Tibial artery (tissue), 4 donors: ENCODE measurements at regions of chr12 and their contacts with region 1.

Region 1: DNA sequence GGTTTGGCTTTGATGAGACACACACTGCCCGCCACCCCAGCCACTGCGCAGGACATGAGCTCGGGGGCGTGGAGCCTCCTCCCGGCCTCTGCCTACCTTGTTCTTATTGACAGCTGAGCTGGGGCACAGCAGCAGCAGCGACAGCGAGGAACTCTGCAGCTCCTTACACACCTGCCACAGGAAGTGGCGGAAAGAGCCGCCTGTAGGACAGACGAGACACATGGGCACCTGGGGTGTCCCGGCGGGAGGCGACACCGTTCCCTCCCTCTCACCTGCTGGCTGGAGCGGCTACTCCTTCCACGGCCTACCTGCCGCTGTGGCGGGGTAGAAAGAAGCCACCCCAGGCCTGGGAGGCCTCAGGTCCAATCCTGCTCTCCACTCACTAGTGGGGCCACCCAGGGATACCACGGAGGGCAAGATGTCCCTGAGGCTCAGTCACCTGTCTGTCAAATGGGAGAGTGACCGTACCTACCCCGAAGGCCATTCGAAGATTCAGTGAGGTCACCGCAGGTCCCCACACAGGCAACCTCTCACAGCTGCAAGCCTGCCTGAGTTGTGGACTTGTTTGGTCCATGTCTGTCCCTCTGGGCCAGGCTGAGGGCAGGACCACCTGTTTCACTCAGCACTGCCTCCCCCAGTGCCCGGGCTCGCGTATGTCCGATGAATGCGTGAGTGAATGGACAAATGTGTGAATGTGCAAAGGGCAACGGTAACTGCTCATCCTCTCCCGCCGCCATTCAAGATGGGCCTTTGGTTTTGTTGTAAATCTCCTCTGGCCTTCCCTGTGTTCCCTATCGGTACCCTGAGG is 42.6 kb downstream of the TRAFD1 start:
- DNase-seq: peak in 1 of 2 donors; percentile 57
- H3K4me3 ChIP-seq: no peak overlapping the region
- H3K27ac ChIP-seq: no peak overlapping the region
- H3K4me1 ChIP-seq: no peaks in the 10 kb centered on the region
- H3K27me3 ChIP-seq: no peaks in the 10 kb centered on the region
- CTCF ChIP-seq: no peak

Region 2: GRCh38 chr12:111841750-111842555 is 326.0 kb before region 1 on chr12 and contains the start of gene MAPKAPK5:
- intact Hi-C with region 1: no loop called
- DNase-seq: peak; percentile 91 to 95
- H3K4me3 ChIP-seq: peak within 1 kb of the TSS; percentile 83 to 100
- H3K27ac ChIP-seq: peak within 1 kb of the TSS; percentile 85 to 96
- H3K4me1 ChIP-seq: peaks cover 0 to 47% (median 42%) of the 10 kb centered on the region in 4 donors
- H3K27me3 ChIP-seq: no peaks in the 10 kb centered on the region
- CTCF ChIP-seq: no peak

Region 3: DNA sequence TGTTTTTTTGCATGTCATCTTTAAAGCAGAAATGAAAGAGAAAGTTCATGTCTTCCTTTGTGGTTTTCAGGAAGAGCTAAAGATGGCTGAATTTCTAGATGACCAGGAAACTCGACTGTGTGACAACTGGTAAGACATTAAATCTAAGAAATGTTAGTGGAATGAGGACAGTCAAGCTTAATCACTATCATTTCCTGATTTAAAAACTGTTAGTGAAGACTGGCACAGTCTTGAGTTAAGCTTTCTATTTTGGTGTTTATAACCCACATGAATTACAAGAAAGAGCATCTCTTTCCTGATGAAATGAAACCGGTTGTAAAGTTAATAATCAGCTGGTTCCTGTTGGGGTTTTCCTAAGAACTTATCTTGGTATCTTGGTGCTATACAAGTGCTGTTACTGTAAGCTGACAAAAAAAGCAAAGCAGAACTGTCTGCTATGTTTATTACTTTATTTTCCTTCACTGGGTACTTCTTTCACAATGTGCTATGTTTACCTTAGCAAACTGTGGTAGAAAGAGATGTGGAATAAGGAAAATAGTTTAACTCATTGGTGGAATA is 37.4 kb before region 1 on chr12:
- intact Hi-C with region 1: loop called (anchors 2 kb)
- DNase-seq: no peak
- H3K4me3 ChIP-seq: peak overlapping the region in 1 of 2 donors; percentile 6
- H3K27ac ChIP-seq: peak overlapping the region; percentile 17 to 55
- H3K4me1 ChIP-seq: peaks cover 0 to 62% (median 32%) of the 10 kb centered on the region in 4 donors
- H3K27me3 ChIP-seq: no peaks in the 10 kb centered on the region
- CTCF ChIP-seq: no peak